ENCODE measurements at regions of chr12 and their contacts with region 1.

Region 1: GRCh38 chr12:49644620-49644994 is 21.2 kb downstream of the PRPF40B start:
- DNase-seq: peak; percentile 80 to 93
- ATAC-seq: peak; percentile 88 to 100 (median 96)
- H3K4me3 ChIP-seq: no peak overlapping the region
- H3K4me3 Mint-ChIP-seq: no peak overlapping the region
- H3K27ac ChIP-seq: peak overlapping the region; percentile 41
- H3K27ac Mint-ChIP-seq: peak overlapping the region; percentile 67 to 89
- H3K4me1 ChIP-seq: peaks cover 13% of the 10 kb centered on the region
- H3K4me1 Mint-ChIP-seq: peaks cover 22 to 50% of the 10 kb centered on the region in 2 donors
- H3K27me3 ChIP-seq: no peaks in the 10 kb centered on the region
- H3K27me3 Mint-ChIP-seq: no peaks in the 10 kb centered on the region
- CTCF ChIP-seq: peak; percentile 97

Region 2: GRCh38 chr12:49553512-49554088 is 91.0 kb before region 1 on chr12:
- intact Hi-C with region 1: no loop called
- DNase-seq: peak in 1 of 2 donors; percentile 72
- ATAC-seq: peak in 2 of 3 donors; percentile 33 to 44
- H3K4me3 ChIP-seq: no peak overlapping the region
- H3K4me3 Mint-ChIP-seq: no peak overlapping the region
- H3K27ac ChIP-seq: no peak overlapping the region
- H3K27ac Mint-ChIP-seq: no peak overlapping the region
- H3K4me1 ChIP-seq: peaks cover 9% of the 10 kb centered on the region
- H3K4me1 Mint-ChIP-seq: peaks cover 0 to 4% of the 10 kb centered on the region in 2 donors
- H3K27me3 ChIP-seq: peaks cover 3% of the 10 kb centered on the region
- H3K27me3 Mint-ChIP-seq: peaks cover 0 to 10% of the 10 kb centered on the region in 2 donors
- CTCF ChIP-seq: no peak

Region 3: GRCh38 chr12:49609746-49610089 is 34.9 kb before region 1 on chr12:
- intact Hi-C with region 1: no loop called
- DNase-seq: no peak
- ATAC-seq: no peak
- H3K4me3 ChIP-seq: no peak overlapping the region
- H3K4me3 Mint-ChIP-seq: no peak overlapping the region
- H3K27ac ChIP-seq: no peak overlapping the region
- H3K27ac Mint-ChIP-seq: no peak overlapping the region
- H3K4me1 ChIP-seq: no peaks in the 10 kb centered on the region
- H3K4me1 Mint-ChIP-seq: no peaks in the 10 kb centered on the region
- H3K27me3 ChIP-seq: no peaks in the 10 kb centered on the region
- H3K27me3 Mint-ChIP-seq: peaks cover 12 to 13% of the 10 kb centered on the region in 2 donors
- CTCF ChIP-seq: no peak

Region 4: GRCh38 chr12:49671031-49671765 is 26.6 kb after region 1 on chr12:
- intact Hi-C with region 1: loop called (anchors 2 kb)
- DNase-seq: peak; percentile 48 to 87
- ATAC-seq: peak; percentile 73 to 84 (median 82)
- H3K4me3 ChIP-seq: no peak overlapping the region
- H3K4me3 Mint-ChIP-seq: peak overlapping the region; percentile 74
- H3K27ac ChIP-seq: peak overlapping the region; percentile 91
- H3K27ac Mint-ChIP-seq: peak overlapping the region; percentile 89 to 92
- H3K4me1 ChIP-seq: peaks cover 66% of the 10 kb centered on the region
- H3K4me1 Mint-ChIP-seq: peaks cover 82 to 97% of the 10 kb centered on the region in 2 donors
- H3K27me3 ChIP-seq: no peaks in the 10 kb centered on the region
- H3K27me3 Mint-ChIP-seq: no peaks in the 10 kb centered on the region
- CTCF ChIP-seq: no peak

Region 5: DNA sequence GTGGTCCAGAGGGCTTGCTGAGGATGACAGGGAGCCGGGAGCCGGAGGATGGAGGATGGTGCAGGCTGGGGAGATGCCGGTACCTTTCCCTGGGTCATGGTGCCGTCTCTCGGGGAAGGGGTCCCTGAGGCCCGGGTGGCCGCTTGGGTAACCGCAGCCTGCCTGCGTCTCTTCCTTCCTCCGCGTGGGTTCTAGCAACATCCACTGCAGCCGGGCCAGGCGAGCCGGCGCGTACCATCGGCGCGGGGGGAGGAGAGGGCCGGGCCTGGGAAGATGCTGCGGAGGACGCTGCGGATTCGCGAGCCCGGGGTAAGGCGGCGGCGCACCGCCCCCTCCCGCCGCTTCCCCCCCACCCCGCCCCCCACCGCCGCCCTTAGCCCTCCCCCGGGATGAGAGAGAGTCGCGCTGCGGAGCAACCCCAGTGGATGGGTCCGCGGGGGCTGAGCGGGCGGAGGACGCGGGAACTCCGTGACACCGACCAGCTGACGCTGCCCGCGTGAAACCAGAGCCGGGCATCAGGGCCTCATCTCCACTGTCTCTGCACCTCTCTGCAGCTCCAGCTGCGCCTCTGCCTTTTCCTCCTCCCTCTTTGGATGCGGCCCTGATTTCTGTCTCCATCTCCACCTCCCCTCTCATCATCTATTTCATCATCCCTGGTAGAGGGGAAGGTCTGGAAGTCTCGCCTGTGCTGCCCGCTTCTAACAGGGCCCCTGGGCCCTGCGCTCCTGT is 259.3 kb after region 1 on chr12 and contains the start of gene FAIM2:
- intact Hi-C with region 1: no loop called
- DNase-seq: peak; percentile 30 to 61
- ATAC-seq: peak; percentile 40 to 84 (median 83)
- H3K4me3 ChIP-seq: peak within 1 kb of the TSS; percentile 7
- H3K4me3 Mint-ChIP-seq: peak within 1 kb of the TSS; percentile 91
- H3K27ac ChIP-seq: no peak within 1 kb of the TSS
- H3K27ac Mint-ChIP-seq: peak within 1 kb of the TSS; percentile 28 to 62
- H3K4me1 ChIP-seq: peaks cover 14% of the 10 kb centered on the region
- H3K4me1 Mint-ChIP-seq: peaks cover 8 to 18% of the 10 kb centered on the region in 2 donors
- H3K27me3 ChIP-seq: no peaks in the 10 kb centered on the region
- H3K27me3 Mint-ChIP-seq: peaks cover 0 to 20% of the 10 kb centered on the region in 2 donors
- CTCF ChIP-seq: no peak
- total RNA-seq, gene FAIM2: 0.09 to 0.57 TPM in 2 of 3 donors, not detected in the other